ENCODE measurements at regions of chrX and their contacts with region 1.

Region 1: DNA sequence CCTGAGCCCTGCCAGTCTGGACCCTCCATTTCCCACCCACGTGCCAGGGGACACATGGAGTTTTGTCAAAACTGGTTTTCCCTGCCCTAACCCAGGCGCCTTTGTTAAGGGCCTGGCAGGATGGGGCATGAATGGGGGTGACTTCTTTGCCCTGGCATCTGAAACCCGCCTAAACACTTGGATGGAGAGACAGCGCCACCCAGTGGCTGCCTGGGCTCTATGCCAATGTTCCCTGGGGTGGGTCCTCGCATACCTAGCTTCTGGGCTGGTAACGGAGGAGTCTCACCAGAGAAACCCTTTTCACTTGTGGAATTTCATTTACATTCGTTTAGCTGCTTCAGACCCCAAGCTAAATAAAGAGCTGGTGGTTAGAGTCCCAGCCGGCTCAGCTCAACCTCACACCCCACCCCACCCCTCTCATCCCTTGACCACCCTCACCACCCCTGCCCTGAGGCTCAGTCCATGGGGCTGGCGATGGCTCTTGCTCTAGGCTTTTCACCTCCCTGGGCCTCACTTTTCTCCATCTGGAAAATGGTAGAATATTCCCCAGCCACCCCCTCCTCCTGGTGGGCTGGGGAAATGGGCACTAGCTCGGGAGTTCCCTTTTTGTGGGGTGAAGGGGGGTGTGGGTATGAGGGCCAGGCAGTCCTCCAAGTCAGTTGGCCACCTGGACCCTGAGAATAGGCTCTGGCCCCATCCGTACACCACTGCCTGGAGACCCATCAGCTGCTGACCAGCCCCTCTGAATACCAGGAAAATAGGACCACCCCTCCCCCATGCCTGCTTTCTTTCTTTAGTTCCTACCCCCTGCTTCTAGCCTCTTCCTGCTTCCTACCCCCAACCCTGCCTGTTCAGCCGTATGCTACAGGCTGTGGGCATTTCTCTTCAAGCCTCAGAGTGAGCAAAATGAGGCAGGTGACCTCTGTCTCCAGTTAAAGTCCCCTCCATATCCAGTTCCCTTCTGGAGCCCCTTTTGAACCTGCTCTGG is 57.1 kb upstream of the PJA1 start:
- DNase-seq: peak; percentile 88
- H3K4me3 Mint-ChIP-seq: no peak overlapping the region
- H3K27ac Mint-ChIP-seq: no peak overlapping the region
- H3K4me1 Mint-ChIP-seq: no peaks in the 10 kb centered on the region
- H3K27me3 Mint-ChIP-seq: no peaks in the 10 kb centered on the region

Region 2: GRCh38 chrX:69093960-69094871 is 128.2 kb before region 1 on chrX:
- intact Hi-C with region 1: loop called (anchors 1 kb)
- DNase-seq: peak; percentile 73
- H3K4me3 Mint-ChIP-seq: no peak overlapping the region
- H3K27ac Mint-ChIP-seq: no peak overlapping the region
- H3K4me1 Mint-ChIP-seq: no peaks in the 10 kb centered on the region
- H3K27me3 Mint-ChIP-seq: no peaks in the 10 kb centered on the region

Region 3: GRCh38 chrX:69412661-69413060 is 190.3 kb after region 1 on chrX:
- intact Hi-C with region 1: no loop called
- DNase-seq: no peak
- H3K4me3 Mint-ChIP-seq: no peak overlapping the region
- H3K27ac Mint-ChIP-seq: no peak overlapping the region
- H3K4me1 Mint-ChIP-seq: no peaks in the 10 kb centered on the region
- H3K27me3 Mint-ChIP-seq: no peaks in the 10 kb centered on the region